Head of caudate nucleus (tissue), 42 donors: ENCODE measurements at regions of chr7 and their contacts with region 1.

Region 1: GRCh38 chr7:25389489-25390106 is 161.3 kb upstream of the NPVF start:
- DNase-seq: peak in 15 of 42 donors; percentile 18 to 79 (median 48)

Region 2: DNA sequence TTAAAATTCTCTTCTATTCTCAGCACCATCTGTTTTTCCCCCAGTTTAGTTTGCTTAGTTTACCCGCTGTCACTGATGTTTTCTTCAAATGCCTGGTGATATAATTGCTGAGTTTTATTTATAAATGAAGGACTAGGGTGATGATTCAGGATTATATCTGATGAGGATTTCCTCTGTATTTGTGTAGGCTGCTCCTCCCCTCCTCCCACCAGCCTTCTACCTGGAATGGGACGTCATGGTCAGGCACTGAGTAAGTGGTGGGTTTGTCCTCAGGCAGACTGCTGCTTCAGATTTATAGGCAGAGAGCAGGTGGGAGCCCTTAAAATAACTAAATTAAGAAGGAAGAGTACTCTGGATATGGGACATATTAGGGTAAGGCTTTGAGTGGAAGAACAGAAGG is 780.5 kb before region 1 on chr7:
- intact Hi-C with region 1: no loop called
- DNase-seq: no peak

Region 3: GRCh38 chr7:25259587-25260243 is 129.9 kb before region 1 on chr7:
- intact Hi-C with region 1: loop called (anchors 2 kb)
- DNase-seq: peak in 41 of 42 donors; percentile 38 to 91 (median 72)

Region 4: GRCh38 chr7:25565949-25566348 is 176.4 kb after region 1 on chr7:
- intact Hi-C with region 1: loop called (anchors 2 kb)
- DNase-seq: peak in 41 of 42 donors; percentile 35 to 88 (median 66)

Region 5: GRCh38 chr7:25597946-25598345 is 208.3 kb after region 1 on chr7:
- intact Hi-C with region 1: no loop called
- DNase-seq: peak in 9 of 42 donors; percentile 14 to 70 (median 22)